Cardiac septum (tissue), 1 donor: ENCODE measurements at regions of chr12 and their contacts with region 1.

Region 1: GRCh38 chr12:15001733-15002382 is 29.0 kb downstream of the PDE6H start:
- DNase-seq: peak; percentile 76

Region 2: GRCh38 chr12:15074351-15074750 is 72.5 kb after region 1 on chr12:
- intact Hi-C with region 1: no loop called
- DNase-seq: no peak

Region 3: DNA sequence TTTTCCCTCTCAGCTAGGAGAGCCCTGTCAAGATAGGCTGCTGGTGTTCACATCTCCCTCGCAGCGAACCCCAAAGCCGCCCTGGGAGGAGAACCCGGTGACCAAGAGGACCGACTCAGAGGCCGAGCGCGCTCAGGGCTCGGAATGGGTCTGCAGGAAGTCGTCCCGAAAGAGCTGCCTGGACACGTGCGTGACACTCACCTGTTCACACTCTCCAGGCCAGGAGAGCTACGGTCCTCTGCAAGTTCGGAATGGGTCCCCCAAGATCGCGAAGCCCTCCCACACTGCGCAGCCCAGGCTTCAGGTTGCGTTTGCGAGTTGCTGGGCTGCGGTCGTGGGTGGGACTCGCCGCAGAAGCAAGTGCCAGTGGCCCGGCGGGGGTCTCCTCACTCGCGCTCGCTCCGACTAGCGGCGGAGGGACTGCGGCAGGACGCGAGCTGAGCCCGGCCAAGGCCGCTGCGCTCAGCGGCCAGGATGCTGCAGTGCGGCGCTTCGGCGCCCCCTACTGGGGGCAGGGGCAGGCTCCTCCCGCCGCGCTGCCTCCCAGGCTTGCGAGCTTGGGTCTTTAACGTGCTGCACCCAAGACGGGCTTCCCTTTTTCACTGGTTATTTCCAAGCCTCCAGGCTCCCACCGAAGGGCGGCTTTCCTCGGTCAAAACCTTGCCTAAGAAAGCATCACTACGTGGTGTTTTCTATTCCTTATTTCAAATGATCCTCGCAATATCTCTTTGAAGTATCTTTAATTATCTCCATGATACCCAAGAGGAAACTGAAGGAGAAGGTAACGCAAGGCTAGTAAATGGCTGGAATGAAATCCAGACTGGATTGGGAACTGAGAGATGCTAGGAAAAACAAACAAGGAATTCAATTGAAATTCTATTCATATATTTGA is 219.4 kb after region 1 on chr12 and contains the start of gene RERG:
- intact Hi-C with region 1: loop called (anchors 2 kb)
- DNase-seq: peak; percentile 87
- total RNA-seq, gene RERG: 3.1 TPM